ENCODE measurements at regions of chr1 and their contacts with region 1.

Region 1: DNA sequence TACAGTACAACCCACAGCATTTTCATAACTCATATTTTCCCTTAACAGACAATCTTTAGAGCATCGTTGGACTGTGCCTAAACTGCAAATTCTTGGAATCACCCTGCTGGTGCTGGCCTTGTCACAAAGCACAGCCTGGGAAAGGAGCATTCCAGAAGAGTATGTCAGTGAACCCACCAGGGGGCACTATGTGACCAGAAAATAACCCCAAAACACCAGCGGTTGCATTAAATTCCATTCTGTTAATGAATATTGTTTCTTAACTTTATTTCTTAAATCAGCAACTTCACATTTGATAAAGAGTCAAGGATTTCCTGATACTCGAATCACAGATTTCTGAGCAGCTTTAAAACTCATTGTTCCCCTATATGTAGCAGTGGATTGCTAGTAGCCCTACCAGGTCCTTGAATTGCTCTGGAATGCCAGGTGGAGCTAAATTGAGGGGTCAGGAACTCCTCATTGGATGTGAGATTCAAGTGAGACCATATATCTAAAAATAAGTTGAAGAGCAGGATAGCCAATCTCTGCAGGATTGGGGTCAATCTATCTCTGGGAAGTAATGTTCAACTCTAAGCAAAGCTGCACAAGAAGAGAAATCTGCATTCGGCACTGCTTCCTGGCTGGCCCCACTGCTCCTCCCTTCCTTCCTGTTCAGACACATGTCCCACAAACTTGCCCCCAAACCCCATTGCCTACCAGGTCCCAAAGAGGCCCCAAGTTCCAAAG is 12.7 kb upstream of the RAB4A start:
- DNase-seq: no peak
- H3K4me3 ChIP-seq: no peak overlapping the region
- H3K27ac ChIP-seq: no peak overlapping the region
- H3K4me1 ChIP-seq: peaks cover 6% of the 10 kb centered on the region
- H3K27me3 ChIP-seq: no peaks in the 10 kb centered on the region
- CTCF ChIP-seq: peak; percentile 68 to 70

Region 2: DNA sequence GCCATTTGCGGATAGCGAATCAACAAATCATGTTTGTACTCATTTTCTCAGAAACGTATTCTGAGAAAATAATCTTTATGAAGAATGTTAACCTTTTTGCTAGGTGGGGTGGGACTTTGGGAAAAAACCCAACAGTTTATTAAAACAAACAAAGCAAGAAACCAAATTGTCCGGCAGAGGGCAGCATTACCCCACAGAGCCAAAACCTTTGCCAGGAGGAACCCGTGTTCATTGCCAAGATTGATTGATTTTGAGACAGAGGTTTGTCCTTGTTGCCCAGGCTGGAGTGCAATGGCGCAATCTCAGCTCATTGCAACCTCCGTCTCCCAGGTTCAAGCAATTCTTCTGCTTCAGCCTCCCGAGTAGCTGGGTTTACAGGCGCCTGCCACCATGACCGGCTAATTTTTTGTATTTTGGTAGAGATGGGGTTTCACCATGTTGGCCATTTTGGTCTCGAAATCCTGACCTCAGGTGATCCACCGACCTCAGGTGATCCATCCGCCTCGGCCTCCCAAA is 593.7 kb before region 1 on chr1:
- CTCF ChIA-PET with region 1: interaction called, 3 read pairs
- dilution Hi-C with region 1: no loop called
- in situ Hi-C with region 1: no loop called
- intact Hi-C with region 1: loop called (anchors 1 kb)
- DNase-seq: peak; percentile 48
- H3K4me3 ChIP-seq: no peak overlapping the region
- H3K27ac ChIP-seq: no peak overlapping the region
- H3K4me1 ChIP-seq: no peaks in the 10 kb centered on the region
- H3K27me3 ChIP-seq: peaks cover 5% of the 10 kb centered on the region
- CTCF ChIP-seq: peak; percentile 63 to 80

Region 3: GRCh38 chr1:228734881-228735801 is 523.1 kb before region 1 on chr1 and contains the start of gene RHOU:
- CTCF ChIA-PET with region 1: no interaction called
- dilution Hi-C with region 1: no loop called
- in situ Hi-C with region 1: no loop called
- intact Hi-C with region 1: loop called (anchors 1 kb)
- DNase-seq: peak; percentile 7
- H3K4me3 ChIP-seq: peak within 1 kb of the TSS in 2 of 3 experiments; percentile 52 to 53
- H3K27ac ChIP-seq: no peak within 1 kb of the TSS
- H3K4me1 ChIP-seq: peaks cover 8% of the 10 kb centered on the region
- H3K27me3 ChIP-seq: peaks cover 28% of the 10 kb centered on the region
- CTCF ChIP-seq: peak in 1 of 2 donors; percentile 19
- total RNA-seq, gene RHOU: 0.14 to 0.67 TPM

Region 4: GRCh38 chr1:229221104-229222019 is 36.8 kb before region 1 on chr1:
- CTCF ChIA-PET with region 1: no interaction called
- dilution Hi-C with region 1: no loop called
- in situ Hi-C with region 1: no loop called
- intact Hi-C with region 1: no loop called
- DNase-seq: peak; percentile 72
- H3K4me3 ChIP-seq: no peak overlapping the region
- H3K27ac ChIP-seq: no peak overlapping the region
- H3K4me1 ChIP-seq: peaks cover 29% of the 10 kb centered on the region
- H3K27me3 ChIP-seq: no peaks in the 10 kb centered on the region
- CTCF ChIP-seq: no peak

Region 5: GRCh38 chr1:229452956-229453801 is 195.0 kb after region 1 on chr1:
- CTCF ChIA-PET with region 1: no interaction called
- dilution Hi-C with region 1: no loop called
- in situ Hi-C with region 1: no loop called
- intact Hi-C with region 1: loop called (anchors 1 kb)
- DNase-seq: no peak
- H3K4me3 ChIP-seq: no peak overlapping the region
- H3K27ac ChIP-seq: no peak overlapping the region
- H3K4me1 ChIP-seq: no peaks in the 10 kb centered on the region
- H3K27me3 ChIP-seq: no peaks in the 10 kb centered on the region
- CTCF ChIP-seq: peak; percentile 55 to 78

Region 6: GRCh38 chr1:229514578-229515275 is 256.5 kb after region 1 on chr1:
- CTCF ChIA-PET with region 1: interaction called, 5 read pairs
- dilution Hi-C with region 1: no loop called
- in situ Hi-C with region 1: no loop called
- intact Hi-C with region 1: loop called (anchors 1 kb)
- DNase-seq: peak; percentile 57
- H3K4me3 ChIP-seq: no peak overlapping the region
- H3K27ac ChIP-seq: no peak overlapping the region
- H3K4me1 ChIP-seq: peaks cover 1% of the 10 kb centered on the region
- H3K27me3 ChIP-seq: no peaks in the 10 kb centered on the region
- CTCF ChIP-seq: peak; percentile 77 to 88

Measured in mammary epithelial cell (primary cell).